ENCODE measurements at regions of chr9 and their contacts with region 1.

Region 1: GRCh38 chr9:109574068-109574882 is 76.2 kb upstream of the PTPN3 start:
- DNase-seq: no peak
- ATAC-seq: peak; percentile 65 to 71

Region 2: GRCh38 chr9:109232449-109233237 is 341.6 kb before region 1 on chr9:
- intact Hi-C with region 1: no loop called
- DNase-seq: no peak
- ATAC-seq: peak in 1 of 2 donors; percentile 44

Region 3: DNA sequence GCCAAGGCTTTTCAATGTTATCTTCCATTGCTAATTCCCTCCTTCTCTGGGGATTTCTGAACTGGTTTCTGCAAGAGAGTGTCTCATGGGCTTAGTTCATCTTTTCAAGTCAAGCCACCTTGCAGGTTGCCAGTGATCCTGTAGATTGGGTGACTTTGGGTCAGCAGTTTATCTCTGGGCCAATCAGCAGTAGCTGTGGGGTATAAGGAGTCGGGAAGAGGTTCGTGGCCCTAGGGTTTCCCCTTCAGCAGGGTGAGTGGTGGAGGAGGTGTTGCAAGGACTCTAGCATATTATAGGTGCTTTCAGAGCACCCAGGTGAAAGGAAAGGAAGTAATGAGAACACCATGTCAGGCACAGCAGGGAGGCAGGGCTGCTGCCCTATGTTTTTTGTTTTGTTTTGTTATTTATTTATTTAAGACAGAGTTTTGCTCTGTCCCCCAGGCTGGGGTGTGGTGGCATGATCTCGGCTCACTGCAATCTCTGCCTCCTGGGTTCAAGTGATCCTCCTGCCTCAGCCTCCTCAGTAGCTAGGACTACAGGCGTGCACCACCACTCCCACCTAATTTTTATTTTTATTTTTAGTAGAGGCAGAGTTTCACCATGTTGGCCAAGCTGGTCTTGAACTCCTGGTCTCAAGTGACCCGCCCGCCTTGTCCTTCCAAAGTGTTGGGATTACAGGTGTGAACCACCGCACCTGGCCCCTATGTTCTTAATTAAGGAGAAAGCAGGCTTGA is 218.9 kb before region 1 on chr9:
- intact Hi-C with region 1: no loop called
- DNase-seq: no peak
- ATAC-seq: no peak

Region 4: GRCh38 chr9:109652964-109653363 is 78.7 kb after region 1 on chr9:
- intact Hi-C with region 1: loop called (anchors 1 to 5 kb)
- DNase-seq: no peak
- ATAC-seq: peak; percentile 74 to 85

Region 5: DNA sequence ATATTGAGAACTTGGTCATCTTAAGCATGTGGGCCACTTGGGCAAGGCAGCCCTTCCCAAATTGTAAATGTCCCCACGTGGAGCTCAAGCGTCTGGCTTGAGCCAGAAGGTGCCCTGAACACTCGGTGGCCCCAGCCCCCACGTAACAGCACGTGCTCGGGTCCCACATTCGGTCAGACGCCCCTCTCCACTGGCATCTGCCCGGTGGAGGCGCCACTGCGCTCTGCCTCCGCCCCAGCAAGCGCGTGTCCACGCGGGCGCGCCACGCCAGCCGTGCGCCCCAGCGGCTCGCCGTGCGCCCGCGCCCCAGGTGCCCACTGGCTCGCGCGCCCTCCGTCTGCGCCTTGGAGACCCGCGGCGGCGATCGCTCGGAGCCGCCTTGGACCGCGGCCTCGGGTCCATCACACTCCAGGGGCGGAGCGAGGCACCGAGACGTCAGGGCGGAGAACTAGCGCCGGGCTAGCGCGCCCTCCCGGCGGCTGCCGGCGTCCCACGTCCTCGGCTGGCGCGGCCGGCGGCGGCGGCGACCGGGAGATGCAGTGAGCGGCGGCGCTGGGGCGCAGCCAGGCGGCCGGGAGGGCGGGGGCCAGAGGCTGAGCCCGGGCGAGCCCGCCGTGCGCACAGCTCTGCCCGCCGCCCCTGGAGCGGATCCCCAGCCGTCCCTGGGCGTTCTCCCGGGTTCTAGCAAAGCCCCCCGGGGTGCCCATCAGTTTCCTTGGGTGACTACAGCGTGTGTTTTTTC is 205.6 kb after region 1 on chr9 and contains the start of gene PALM2AKAP2:
- intact Hi-C with region 1: loop called (anchors 10 kb)
- DNase-seq: peak; percentile 79
- ATAC-seq: peak; percentile 93 to 96
- total RNA-seq, gene PALM2AKAP2: 97.6 to 102 TPM

Region 6: GRCh38 chr9:109821711-109822110 is 247.4 kb after region 1 on chr9:
- intact Hi-C with region 1: loop called in 1 of 2 experiments (anchors 5 kb)
- DNase-seq: no peak
- ATAC-seq: no peak

Region 7: DNA sequence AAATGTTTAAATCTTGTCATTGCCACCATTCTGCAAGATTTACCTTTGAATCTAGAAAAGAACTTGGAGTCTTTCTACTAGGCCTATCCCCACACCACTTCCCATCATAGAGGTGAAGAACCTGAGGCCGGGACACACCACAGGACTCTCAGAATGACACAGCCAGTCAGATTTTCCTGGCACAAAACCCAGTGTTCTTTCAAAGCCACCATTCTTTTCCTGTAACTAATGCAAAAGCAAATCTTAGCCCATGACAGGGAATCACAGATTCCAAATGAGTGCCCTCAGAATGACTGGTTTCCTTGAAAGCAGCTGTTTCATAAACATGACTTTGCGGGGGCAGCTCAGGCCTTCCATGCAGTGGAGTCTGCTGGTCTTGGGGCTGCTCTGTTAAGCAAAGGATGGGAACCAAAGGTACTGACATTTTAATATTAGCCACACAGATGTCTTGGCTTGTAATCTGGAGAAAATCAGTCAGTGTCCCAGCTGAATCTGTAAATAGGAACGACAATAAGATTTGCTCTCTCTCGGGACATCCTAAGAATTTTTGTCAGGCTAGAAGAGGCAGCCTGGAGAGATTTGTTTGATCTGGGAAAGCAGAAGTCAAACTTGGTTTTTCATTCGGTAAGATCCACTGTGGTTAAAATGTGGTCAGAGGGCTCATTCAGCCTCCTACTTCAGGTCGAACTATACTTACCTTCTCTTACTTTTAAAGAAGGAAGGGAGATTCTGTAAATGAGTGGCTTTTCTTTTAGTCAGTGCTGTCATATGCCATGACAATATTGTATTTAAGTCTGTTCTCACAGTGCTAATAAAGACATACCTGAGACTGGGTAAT is 320.9 kb after region 1 on chr9:
- intact Hi-C with region 1: loop called in 1 of 2 experiments (anchors 10 kb)
- DNase-seq: no peak
- ATAC-seq: peak in 1 of 2 donors; percentile 55

Region 8: GRCh38 chr9:110152704-110153374 is 578.6 kb after region 1 on chr9:
- intact Hi-C with region 1: loop called in 1 of 2 experiments (anchors 10 kb)
- DNase-seq: no peak
- ATAC-seq: peak; percentile 20 to 25

Region 9: GRCh38 chr9:110217656-110218099 is 643.4 kb after region 1 on chr9:
- intact Hi-C with region 1: loop called in 1 of 2 experiments (anchors 5 kb)
- DNase-seq: no peak
- ATAC-seq: no peak